ENCODE measurements at regions of chr6 and their contacts with region 1.

Region 1: DNA sequence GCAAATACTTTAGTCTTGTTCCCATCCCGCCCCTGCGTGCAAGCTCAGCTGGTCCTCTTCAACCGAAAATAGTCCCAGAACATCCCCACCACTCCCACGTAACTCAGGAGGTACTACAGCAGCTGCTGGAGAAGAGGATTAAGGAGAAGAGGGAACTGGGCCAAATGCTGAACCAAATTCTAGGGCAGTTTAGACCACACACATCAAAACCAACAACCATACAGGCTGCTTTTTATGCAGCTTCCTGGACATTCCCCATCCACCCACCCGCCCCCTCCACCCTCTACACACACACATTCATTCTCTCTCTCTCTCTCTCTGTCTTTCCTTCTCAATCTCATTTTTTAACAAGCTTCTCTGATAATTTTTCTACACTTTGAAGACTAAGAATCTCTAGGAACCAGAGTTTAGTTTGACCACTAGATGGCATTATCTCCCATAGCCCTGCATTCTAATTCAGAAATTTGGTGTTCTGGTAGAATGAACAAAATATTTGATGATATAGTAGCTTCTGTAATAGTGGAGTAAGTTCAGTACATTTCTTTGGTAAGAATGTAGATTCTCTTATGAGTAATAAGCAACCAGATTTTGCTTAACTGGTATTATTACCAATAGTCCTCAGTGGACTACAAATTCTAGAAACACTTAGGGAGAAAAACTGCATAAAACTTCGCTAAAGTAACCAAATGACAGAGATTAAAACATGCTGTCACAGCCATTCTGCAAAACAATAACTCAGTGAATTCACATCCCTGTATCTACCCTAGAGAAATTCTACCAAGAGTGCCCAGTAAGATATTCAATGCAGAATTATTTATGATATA is 52.1 kb upstream of the BEND6 start:
- DNase-seq: no peak
- ATAC-seq: peak; percentile 26 to 28
- H3K4me3 ChIP-seq: no peak overlapping the region
- H3K27ac ChIP-seq: no peak overlapping the region
- H3K4me1 ChIP-seq: no peaks in the 10 kb centered on the region
- H3K27me3 ChIP-seq: no peaks in the 10 kb centered on the region

Region 2: GRCh38 chr6:56613247-56613851 is 289.5 kb before region 1 on chr6:
- intact Hi-C with region 1: no loop called
- DNase-seq: no peak
- ATAC-seq: no peak
- H3K4me3 ChIP-seq: no peak overlapping the region
- H3K27ac ChIP-seq: no peak overlapping the region
- H3K4me1 ChIP-seq: no peaks in the 10 kb centered on the region
- H3K27me3 ChIP-seq: no peaks in the 10 kb centered on the region

Region 3: GRCh38 chr6:56955171-56956045 is 52.6 kb after region 1 on chr6:
- intact Hi-C with region 1: loop called in 1 of 4 experiments (anchors 5 kb)
- DNase-seq: peak; percentile 78 to 93 (median 90)
- ATAC-seq: peak; percentile 83 to 88
- H3K4me3 ChIP-seq: peak overlapping the region; percentile 74
- H3K27ac ChIP-seq: no peak overlapping the region
- H3K4me1 ChIP-seq: no peaks in the 10 kb centered on the region
- H3K27me3 ChIP-seq: no peaks in the 10 kb centered on the region

Region 4: GRCh38 chr6:56970849-56971248 is 68.0 kb after region 1 on chr6:
- intact Hi-C with region 1: no loop called
- DNase-seq: no peak
- ATAC-seq: no peak
- H3K4me3 ChIP-seq: no peak overlapping the region
- H3K27ac ChIP-seq: no peak overlapping the region
- H3K4me1 ChIP-seq: no peaks in the 10 kb centered on the region
- H3K27me3 ChIP-seq: no peaks in the 10 kb centered on the region

Region 5: DNA sequence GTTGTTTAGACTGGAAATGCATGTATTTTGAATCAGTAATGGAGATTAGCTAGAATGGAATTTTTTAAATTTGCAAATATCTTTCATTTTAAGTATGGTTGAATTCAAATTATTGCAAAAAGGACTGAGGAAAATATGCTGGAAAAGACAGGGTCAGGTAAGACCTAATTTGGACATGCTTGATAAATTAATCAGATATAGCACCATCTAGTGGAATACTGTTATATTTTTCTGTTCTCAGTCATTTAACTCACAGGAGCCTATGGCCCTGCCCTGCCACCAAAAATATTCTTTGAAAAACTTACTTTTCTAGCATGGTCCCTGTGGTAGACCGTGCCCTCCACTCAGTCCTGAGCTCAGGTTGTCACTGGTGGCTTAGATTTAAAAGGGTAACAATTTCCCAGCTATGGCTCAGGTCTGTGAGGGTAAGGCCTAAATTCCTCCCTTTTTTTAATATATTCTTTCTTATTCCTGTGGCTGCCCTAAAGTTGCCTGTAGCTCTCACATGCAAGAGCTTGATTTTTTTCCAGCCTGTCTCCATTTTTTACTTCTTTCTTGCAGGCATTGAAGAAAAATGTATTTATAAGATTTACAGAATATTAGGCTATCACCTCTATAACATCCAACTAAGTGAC is 118.3 kb after region 1 on chr6:
- intact Hi-C with region 1: loop called in 3 of 4 experiments (anchors 5 to 10 kb)
- DNase-seq: no peak
- ATAC-seq: peak; percentile 40 to 41
- H3K4me3 ChIP-seq: no peak overlapping the region
- H3K27ac ChIP-seq: no peak overlapping the region
- H3K4me1 ChIP-seq: no peaks in the 10 kb centered on the region
- H3K27me3 ChIP-seq: no peaks in the 10 kb centered on the region

Region 6: GRCh38 chr6:57316581-57317059 is 413.8 kb after region 1 on chr6:
- intact Hi-C with region 1: loop called (anchors 2 to 10 kb)
- DNase-seq: peak; percentile 80 to 91 (median 84)
- ATAC-seq: peak; percentile 94 to 97
- H3K4me3 ChIP-seq: peak overlapping the region; percentile 96
- H3K27ac ChIP-seq: peak overlapping the region; percentile 72
- H3K4me1 ChIP-seq: peaks cover 6% of the 10 kb centered on the region
- H3K27me3 ChIP-seq: no peaks in the 10 kb centered on the region

Region 7: GRCh38 chr6:57324538-57324937 is 421.7 kb after region 1 on chr6:
- intact Hi-C with region 1: loop called in 3 of 4 experiments (anchors 5 to 10 kb)
- DNase-seq: no peak
- ATAC-seq: no peak
- H3K4me3 ChIP-seq: no peak overlapping the region
- H3K27ac ChIP-seq: no peak overlapping the region
- H3K4me1 ChIP-seq: no peaks in the 10 kb centered on the region
- H3K27me3 ChIP-seq: no peaks in the 10 kb centered on the region

Measured in right cardiac atrium (tissue), 5 donors.